ENCODE measurements at regions of chr6 and their contacts with region 1.

Region 1: DNA sequence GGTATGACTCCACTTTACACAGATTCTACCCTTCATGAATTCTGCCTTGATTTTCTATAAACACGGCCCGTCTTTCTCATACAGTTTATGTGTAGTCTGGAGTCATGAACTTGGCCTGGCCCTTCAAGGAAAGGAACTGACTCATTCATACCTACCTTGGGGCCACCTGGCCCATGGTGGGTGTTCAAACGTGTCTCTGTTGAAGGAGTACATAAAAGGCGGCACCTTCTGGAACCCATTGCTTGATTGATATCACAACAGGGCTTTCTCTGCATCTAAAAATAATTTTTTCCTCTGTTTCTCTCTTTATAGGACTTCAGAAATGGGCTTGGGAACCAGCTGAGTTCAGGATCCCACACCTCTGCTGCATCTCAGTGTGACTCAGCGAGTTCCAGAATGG is 363.0 kb upstream of the SOX4 start:
- DNase-seq: no peak
- ATAC-seq: no peak
- H3K4me3 ChIP-seq: no peak overlapping the region
- H3K27ac ChIP-seq: no peak overlapping the region
- H3K4me1 ChIP-seq: no peaks in the 10 kb centered on the region
- H3K27me3 ChIP-seq: no peaks in the 10 kb centered on the region

Region 2: GRCh38 chr6:21180155-21180554 is 50.4 kb before region 1 on chr6:
- intact Hi-C with region 1: no loop called
- DNase-seq: no peak
- ATAC-seq: no peak
- H3K4me3 ChIP-seq: no peak overlapping the region
- H3K27ac ChIP-seq: no peak overlapping the region
- H3K4me1 ChIP-seq: no peaks in the 10 kb centered on the region
- H3K27me3 ChIP-seq: no peaks in the 10 kb centered on the region

Region 3: DNA sequence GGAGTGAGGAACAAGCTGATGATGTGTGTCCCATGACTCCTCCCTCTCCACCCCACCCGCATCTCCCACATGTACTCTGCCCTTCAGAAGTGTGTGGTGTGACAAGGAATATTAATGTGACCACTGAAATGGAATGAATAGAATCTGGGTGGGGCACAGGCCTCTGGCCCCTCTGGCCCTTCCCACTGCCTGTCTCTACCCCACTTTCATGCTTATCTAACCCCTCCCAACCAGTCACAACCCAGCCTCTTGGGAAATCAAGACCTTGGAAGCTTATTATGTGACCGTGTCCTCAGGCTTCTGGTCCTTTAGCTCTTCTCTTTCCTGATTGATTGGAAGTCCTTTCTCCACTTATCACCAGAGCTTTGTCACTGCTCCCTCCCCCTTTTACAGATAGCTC is 50.8 kb after region 1 on chr6:
- intact Hi-C with region 1: loop called in 1 of 2 experiments (anchors 2 kb)
- DNase-seq: no peak
- ATAC-seq: no peak
- H3K4me3 ChIP-seq: no peak overlapping the region
- H3K27ac ChIP-seq: no peak overlapping the region
- H3K4me1 ChIP-seq: no peaks in the 10 kb centered on the region
- H3K27me3 ChIP-seq: peaks cover 0 to 2% of the 10 kb centered on the region in 2 donors

Measured in aorta (tissue), 5 donors.